ENCODE measurements at regions of chr17 and their contacts with region 1.

Region 1: GRCh38 chr17:7021993-7022778 is 664 bp upstream of the BCL6B start:
- DNase-seq: peak in 1 of 2 experiments; percentile 79
- H3K4me3 ChIP-seq: no peak overlapping the region; the same call in 1 of the 2 replicates
- H3K27ac ChIP-seq: no peak overlapping the region
- H3K4me1 ChIP-seq: 0 out of 2 replicates have a peak, but pooled peaks cover 4% of the 10 kb centered on the region
- H3K27me3 ChIP-seq: no peaks in the 10 kb centered on the region
- CTCF ChIP-seq: peak; percentile 94

Region 2: GRCh38 chr17:6184508-6184907 is 837.7 kb before region 1 on chr17:
- CTCF ChIA-PET with region 1: interaction called, 12 read pairs
- POLR2A ChIA-PET with region 1: no interaction called
- intact Hi-C with region 1: no loop called
- DNase-seq: no peak
- H3K4me3 ChIP-seq: no peak overlapping the region
- H3K27ac ChIP-seq: no peak overlapping the region
- H3K4me1 ChIP-seq: no peaks in the 10 kb centered on the region
- H3K27me3 ChIP-seq: peaks cover 57% of the 10 kb centered on the region
- CTCF ChIP-seq: no peak

Region 3: DNA sequence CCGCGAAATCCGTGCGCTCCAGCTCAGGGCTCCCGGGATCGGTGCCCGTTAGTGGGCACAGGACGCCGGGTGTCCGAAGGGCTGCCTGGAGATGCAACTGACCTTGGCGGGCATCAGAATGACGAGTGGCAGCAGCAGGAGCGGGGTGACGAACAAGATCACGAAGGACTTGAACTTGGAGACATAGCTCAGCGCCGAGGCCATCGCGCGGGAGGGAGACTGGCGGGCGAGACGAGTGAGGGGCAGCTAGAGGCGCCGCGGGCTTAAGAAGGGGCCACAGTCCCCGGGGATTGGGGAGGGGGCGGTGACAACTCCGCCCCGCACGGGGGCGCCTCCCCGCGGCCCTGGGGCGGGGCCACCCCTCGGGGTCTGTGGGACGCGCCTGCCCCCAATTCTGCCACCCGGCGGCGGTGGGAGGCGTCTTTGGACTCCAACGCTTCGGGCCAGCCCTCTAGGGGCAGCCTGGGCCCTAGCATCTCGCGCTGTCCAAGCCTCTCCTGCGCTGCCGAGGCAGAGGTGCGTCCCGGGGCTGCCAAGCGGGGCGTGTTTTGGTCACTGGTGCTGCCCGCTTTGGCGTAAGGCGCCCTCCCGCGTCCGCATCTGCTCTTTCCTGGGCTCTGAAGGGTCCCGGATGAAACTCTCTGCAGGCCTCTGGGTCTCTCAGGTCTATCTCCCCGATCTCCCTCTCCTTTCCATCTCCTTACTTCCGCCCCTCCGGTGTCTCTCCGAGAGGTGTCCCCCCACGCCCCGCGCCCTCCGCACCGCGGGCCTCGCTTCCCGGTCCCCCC is 308.9 kb before region 1 on chr17 and contains the start of gene SLC13A5:
- CTCF ChIA-PET with region 1: no interaction called
- POLR2A ChIA-PET with region 1: no interaction called
- intact Hi-C with region 1: loop called (anchors 5 kb)
- DNase-seq: peak in 1 of 2 experiments; percentile 43
- H3K4me3 ChIP-seq: no peak within 1 kb of the TSS
- H3K27ac ChIP-seq: no peak within 1 kb of the TSS
- H3K4me1 ChIP-seq: no peaks in the 10 kb centered on the region
- H3K27me3 ChIP-seq: no peaks in the 10 kb centered on the region
- CTCF ChIP-seq: no peak
- total RNA-seq, gene SLC13A5: 0.92 and 2.0 TPM in 2 replicates

Region 4: GRCh38 chr17:7035591-7036368 is 13.6 kb after region 1 on chr17 and contains the start of gene SLC16A13:
- CTCF ChIA-PET with region 1: interaction called, 4 read pairs
- POLR2A ChIA-PET with region 1: interaction called, 18 read pairs
- intact Hi-C with region 1: no loop called
- DNase-seq: peak; percentile 93 to 99
- H3K4me3 ChIP-seq: peak within 1 kb of the TSS; percentile 76
- H3K27ac ChIP-seq: peak within 1 kb of the TSS; percentile 71
- H3K4me1 ChIP-seq: peaks cover 20% of the 10 kb centered on the region
- H3K27me3 ChIP-seq: no peaks in the 10 kb centered on the region
- CTCF ChIP-seq: no peak
- total RNA-seq, gene SLC16A13: 33.4 and 40.6 TPM in 2 replicates

Measured in PC-9 (cell line).